Panc1 (cell line): ENCODE measurements at regions of chr14 and their contacts with region 1.

Region 1: DNA sequence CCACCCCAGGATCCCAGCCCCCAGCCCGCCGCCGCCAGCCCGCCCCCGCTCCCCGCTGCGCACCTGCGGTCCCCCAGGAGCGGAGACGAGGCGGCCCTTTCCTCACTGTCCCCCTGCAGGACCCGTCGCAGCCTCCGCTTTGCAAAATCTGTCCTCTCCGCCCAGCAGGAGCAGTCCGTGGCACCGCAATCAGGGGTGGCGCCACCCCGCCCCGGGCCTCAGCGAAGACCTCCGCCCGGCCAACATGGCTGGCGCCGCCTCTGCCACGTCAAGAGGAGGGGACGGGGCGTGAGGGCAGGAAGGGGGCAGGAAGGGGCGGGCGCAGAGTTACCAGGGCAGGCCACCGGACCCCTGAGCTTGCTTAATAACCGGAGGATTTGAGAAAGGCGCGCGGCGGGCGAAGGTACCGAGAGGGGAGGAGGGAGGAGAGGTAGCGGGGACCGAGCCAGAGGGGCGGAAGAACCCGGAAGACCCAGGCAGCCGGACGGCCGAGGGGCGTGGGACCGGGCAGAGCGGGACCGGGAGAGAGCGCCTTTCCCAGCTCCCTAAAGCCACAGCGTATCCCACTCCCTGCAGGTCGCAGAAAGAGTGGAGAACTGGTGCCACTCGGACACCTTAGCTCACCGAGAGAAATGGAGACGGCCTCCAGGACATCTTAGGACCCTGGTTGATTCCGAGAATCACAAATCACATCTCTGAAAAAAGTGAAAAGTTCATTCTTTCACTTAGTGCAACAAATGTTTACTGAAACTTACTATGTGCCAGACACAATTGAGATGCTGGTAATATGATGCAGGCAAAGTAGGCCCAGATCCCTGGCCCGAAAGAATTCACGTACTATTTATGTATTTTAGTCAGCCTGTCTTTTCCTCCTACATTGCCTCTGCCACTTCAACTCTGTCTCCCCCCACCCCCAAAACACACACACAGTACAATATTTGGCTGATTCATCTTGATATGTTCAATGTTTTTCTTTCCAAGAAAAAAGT is at the start of gene SEC23A:
- DNase-seq: no peak
- ATAC-seq: peak; percentile 98
- H3K4me3 ChIP-seq: peak within 1 kb of the TSS; percentile 69 to 92
- H3K27ac ChIP-seq: peak within 1 kb of the TSS; percentile 83
- H3K4me1 ChIP-seq: no peaks in the 10 kb centered on the region; the same call in none of the 2 replicates
- H3K27me3 ChIP-seq: no peaks in the 10 kb centered on the region
- CTCF ChIP-seq: no peak
- total RNA-seq, gene SEC23A: 76.7 TPM

Region 2: GRCh38 chr14:38929416-38929815 is 173.8 kb before region 1 on chr14:
- CTCF ChIA-PET with region 1: no interaction called
- POLR2A ChIA-PET with region 1: no interaction called
- in situ Hi-C with region 1: no loop called
- intact Hi-C with region 1: no loop called
- DNase-seq: no peak
- ATAC-seq: no peak
- H3K4me3 ChIP-seq: no peak overlapping the region
- H3K27ac ChIP-seq: no peak overlapping the region
- H3K4me1 ChIP-seq: no peaks in the 10 kb centered on the region
- H3K27me3 ChIP-seq: no peaks in the 10 kb centered on the region
- CTCF ChIP-seq: no peak

Region 3: GRCh38 chr14:39212693-39213092 is 109.4 kb after region 1 on chr14:
- CTCF ChIA-PET with region 1: interaction called, 15 read pairs
- POLR2A ChIA-PET with region 1: no interaction called
- in situ Hi-C with region 1: no loop called
- intact Hi-C with region 1: no loop called
- DNase-seq: no peak
- ATAC-seq: no peak
- H3K4me3 ChIP-seq: no peak overlapping the region
- H3K27ac ChIP-seq: no peak overlapping the region
- H3K4me1 ChIP-seq: peaks cover 2% of the 10 kb centered on the region; the same call in 1 of the 2 replicates
- H3K27me3 ChIP-seq: no peaks in the 10 kb centered on the region
- CTCF ChIP-seq: no peak

Region 4: DNA sequence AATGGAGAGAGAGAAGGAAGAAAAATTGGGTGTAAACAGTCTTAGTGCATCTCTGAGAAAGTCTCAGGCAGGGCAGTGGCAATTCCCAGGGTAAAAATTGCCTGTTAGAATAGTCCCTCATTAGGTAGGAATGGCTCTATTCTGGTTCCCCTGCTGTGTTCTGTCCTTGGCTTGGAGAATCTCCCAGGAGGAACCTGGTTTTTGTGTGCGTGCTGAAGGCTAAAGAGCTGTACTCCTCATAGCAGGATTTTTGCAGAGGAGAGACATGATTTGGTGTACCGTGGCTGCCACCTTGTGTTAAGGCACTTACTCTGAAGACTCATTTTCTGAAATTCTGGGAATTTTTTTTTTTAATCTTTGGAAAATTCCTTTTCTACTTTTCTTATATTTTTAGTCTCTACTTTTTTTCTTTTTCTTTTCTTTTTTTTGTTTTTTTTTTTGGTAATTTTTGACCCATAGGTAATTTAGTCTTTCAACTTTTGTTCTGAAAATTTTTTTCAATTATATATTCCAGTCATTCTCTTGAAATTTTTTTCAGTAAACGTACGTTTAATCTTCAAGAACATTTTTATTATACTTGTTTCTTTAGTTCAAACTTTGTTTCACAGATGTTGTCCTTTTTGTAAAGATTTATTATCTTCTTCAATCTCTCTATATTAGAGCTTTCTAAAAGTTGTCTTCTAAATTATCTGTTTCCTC is 265.1 kb after region 1 on chr14:
- CTCF ChIA-PET with region 1: no interaction called
- POLR2A ChIA-PET with region 1: no interaction called
- in situ Hi-C with region 1: no loop called
- intact Hi-C with region 1: loop called (anchors 5 kb)
- DNase-seq: no peak
- ATAC-seq: peak; percentile 70; the same call in 1 of the 2 replicates
- H3K4me3 ChIP-seq: no peak overlapping the region
- H3K27ac ChIP-seq: no peak overlapping the region
- H3K4me1 ChIP-seq: no peaks in the 10 kb centered on the region; the same call in 1 of the 2 replicates
- H3K27me3 ChIP-seq: no peaks in the 10 kb centered on the region
- CTCF ChIP-seq: peak; percentile 62

Region 5: GRCh38 chr14:39432179-39432618 is 328.9 kb after region 1 on chr14 and contains the start of gene FBXO33:
- CTCF ChIA-PET with region 1: no interaction called
- POLR2A ChIA-PET with region 1: no interaction called
- in situ Hi-C with region 1: no loop called
- intact Hi-C with region 1: loop called (anchors 5 kb)
- DNase-seq: peak; percentile 74
- ATAC-seq: peak; percentile 96
- H3K4me3 ChIP-seq: peak within 1 kb of the TSS; percentile 72 to 88
- H3K27ac ChIP-seq: peak within 1 kb of the TSS; percentile 92
- H3K4me1 ChIP-seq: peaks cover 12% of the 10 kb centered on the region
- H3K27me3 ChIP-seq: no peaks in the 10 kb centered on the region
- CTCF ChIP-seq: no peak
- total RNA-seq, gene FBXO33: 6.6 TPM